ENCODE measurements at regions of chr3 and their contacts with region 1.

Region 1: GRCh38 chr3:40179016-40179415 is 130.5 kb upstream of the EIF1B start:
- DNase-seq: peak; percentile 58 to 79 (median 58)
- ATAC-seq: peak; percentile 91
- H3K4me3 ChIP-seq: no peak overlapping the region
- H3K27ac ChIP-seq: no peak overlapping the region
- H3K4me1 ChIP-seq: no peaks in the 10 kb centered on the region
- H3K27me3 ChIP-seq: peaks cover 6 to 15% of the 10 kb centered on the region in 2 experiments; a peak in 2 of 5 replicates
- CTCF ChIP-seq: peak; percentile 78 to 88 (median 83)
- EP300 ChIP-seq: no peak
- POLR2A ChIP-seq: no peak
- RAD21 ChIP-seq: peak; percentile 73 to 84

Region 2: GRCh38 chr3:39724233-39724846 is 454.7 kb before region 1 on chr3:
- CTCF ChIA-PET with region 1: no interaction called
- POLR2A ChIA-PET with region 1: no interaction called
- in situ Hi-C with region 1: no loop called
- intact Hi-C with region 1: loop called (anchors 5 kb)
- DNase-seq: peak in 2 of 4 experiments; percentile 8 to 15
- ATAC-seq: peak; percentile 71
- H3K4me3 ChIP-seq: no peak overlapping the region
- H3K27ac ChIP-seq: no peak overlapping the region
- H3K4me1 ChIP-seq: no peaks in the 10 kb centered on the region
- H3K27me3 ChIP-seq: no peaks in the 10 kb centered on the region; a peak in 1 of 5 replicates
- CTCF ChIP-seq: peak; percentile 31 to 59 (median 37); a peak in 3 of 6 replicates
- EP300 ChIP-seq: no peak
- POLR2A ChIP-seq: no peak
- RAD21 ChIP-seq: peak; percentile 55 to 63

Region 3: DNA sequence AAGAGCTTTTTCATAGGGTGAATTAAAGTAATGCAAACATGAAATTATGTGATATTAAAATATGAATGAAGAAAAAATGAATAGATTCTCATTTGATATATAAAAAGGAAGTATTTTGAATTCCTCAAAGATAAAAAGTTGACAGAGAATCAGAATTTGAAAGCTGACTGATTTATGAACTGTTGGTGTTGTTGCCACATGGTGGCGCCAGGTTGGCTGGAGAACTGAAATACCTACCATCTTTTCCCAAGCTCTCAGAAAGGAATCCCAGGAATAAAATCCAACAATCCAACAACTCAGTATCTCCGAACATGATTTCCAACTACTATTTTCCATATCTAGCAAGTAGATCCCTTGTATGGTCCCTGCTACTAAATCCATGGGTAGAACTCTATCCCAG is 366.5 kb before region 1 on chr3:
- CTCF ChIA-PET with region 1: no interaction called
- POLR2A ChIA-PET with region 1: no interaction called
- in situ Hi-C with region 1: no loop called
- intact Hi-C with region 1: loop called (anchors 10 kb)
- DNase-seq: peak in 1 of 4 experiments; percentile 12
- ATAC-seq: no peak
- H3K4me3 ChIP-seq: no peak overlapping the region
- H3K27ac ChIP-seq: no peak overlapping the region
- H3K4me1 ChIP-seq: peaks cover 0 to 15% of the 10 kb centered on the region in 2 experiments; a peak in 2 of 5 replicates
- H3K27me3 ChIP-seq: peaks cover 2 to 29% of the 10 kb centered on the region in 2 experiments; a peak in 3 of 5 replicates
- CTCF ChIP-seq: peak in 2 of 3 experiments; percentile 44 to 47; a peak in 4 of 6 replicates
- EP300 ChIP-seq: no peak
- POLR2A ChIP-seq: no peak
- RAD21 ChIP-seq: peak in 1 of 2 experiments; percentile 30; a peak in 2 of 4 replicates

Region 4: GRCh38 chr3:40009991-40010390 is 169.0 kb before region 1 on chr3:
- CTCF ChIA-PET with region 1: no interaction called
- POLR2A ChIA-PET with region 1: no interaction called
- in situ Hi-C with region 1: no loop called
- intact Hi-C with region 1: loop called (anchors 10 kb)
- DNase-seq: no peak
- ATAC-seq: no peak
- H3K4me3 ChIP-seq: no peak overlapping the region
- H3K27ac ChIP-seq: no peak overlapping the region
- H3K4me1 ChIP-seq: no peaks in the 10 kb centered on the region
- H3K27me3 ChIP-seq: no peaks in the 10 kb centered on the region
- CTCF ChIP-seq: no peak
- EP300 ChIP-seq: no peak
- POLR2A ChIP-seq: no peak
- RAD21 ChIP-seq: no peak

Measured in K562 (cell line).